ENCODE measurements at regions of chr12 and their contacts with region 1.

Region 1: DNA sequence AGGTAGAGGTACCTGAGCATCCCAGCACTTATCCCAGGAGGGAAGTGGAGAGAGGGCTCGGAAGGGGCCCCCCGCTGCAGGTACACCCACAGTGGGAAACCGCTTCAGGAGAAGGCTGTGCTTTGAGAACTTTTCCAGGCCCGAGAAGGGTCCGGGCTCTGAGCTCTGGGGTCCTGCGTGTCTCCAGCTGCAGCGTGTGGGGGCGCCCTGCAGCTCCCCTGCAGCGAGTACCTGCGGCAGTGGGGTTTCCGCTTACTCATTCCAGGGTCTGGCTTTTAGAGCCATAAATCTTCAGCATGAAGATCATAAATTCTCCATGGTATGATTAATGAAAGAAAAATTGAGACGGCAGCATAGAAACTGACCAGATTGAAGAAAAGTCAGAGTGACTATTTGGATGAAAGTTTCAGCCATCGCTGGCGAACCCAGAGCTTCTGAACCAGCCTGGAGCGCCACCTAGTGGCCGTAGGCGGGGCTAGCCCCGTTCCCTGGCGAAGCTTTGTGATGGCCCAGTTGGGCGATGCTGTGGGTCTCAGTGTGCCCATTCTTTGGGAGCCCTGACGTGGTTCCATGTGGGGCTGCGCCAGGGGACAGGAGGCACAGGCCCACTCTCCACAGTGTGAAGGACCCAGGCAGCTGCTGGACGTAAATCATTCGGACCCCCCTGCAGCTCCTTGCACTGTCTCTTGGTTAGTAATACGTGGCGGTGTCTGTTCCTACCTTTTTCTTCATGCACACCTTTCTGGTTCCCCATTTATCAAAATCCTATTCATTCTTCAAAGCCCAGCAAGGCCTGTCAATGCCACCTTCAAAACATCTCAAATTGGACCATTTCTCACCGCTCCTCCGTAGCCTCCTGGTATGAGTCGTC is 198.2 kb downstream of the TSPAN9 start:
- DNase-seq: peak; percentile 24
- ATAC-seq: peak; percentile 82
- H3K4me3 ChIP-seq: no peak overlapping the region
- H3K27ac ChIP-seq: no peak overlapping the region
- H3K4me1 ChIP-seq: peaks cover 7 to 28% of the 10 kb centered on the region in 2 experiments
- H3K27me3 ChIP-seq: no peaks in the 10 kb centered on the region
- CTCF ChIP-seq: peak; percentile 87 to 97 (median 96)
- POLR2A ChIP-seq: no peak
- RAD21 ChIP-seq: peak; percentile 92

Region 2: DNA sequence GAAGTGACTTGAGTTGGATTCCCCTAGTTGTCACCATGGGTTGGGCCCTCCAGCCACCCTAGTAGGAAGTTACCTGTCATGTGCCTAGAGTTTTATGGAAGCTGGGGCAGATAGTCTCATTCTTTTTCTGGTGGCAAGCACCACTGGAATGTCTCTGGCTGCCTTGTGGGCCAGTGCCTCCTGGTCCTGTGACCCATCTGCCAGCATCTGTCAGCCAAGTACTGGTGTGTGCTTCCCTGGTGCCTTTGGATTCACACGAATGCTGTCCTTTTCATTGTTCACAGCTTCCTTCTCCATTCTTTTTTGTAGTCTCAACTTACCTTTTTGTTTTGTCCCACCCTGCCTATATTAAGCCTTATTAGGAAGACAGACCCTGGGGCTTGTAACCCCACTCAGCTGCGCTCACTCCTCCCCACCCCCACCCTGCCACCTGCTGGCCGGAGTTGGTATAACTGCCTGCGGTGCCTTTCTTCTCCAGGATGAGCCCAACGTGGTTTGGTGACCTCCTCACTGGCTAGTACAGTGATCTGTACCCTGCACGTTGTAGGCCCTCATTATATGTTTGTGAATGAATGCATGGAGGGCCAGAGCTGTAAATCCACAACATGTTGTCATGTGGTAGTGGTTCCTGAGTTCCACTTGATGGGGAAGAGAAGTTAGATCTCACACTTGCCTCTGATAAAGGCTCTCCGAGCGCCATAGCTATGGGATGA is 72.5 kb before region 1 on chr12:
- CTCF ChIA-PET with region 1: interaction called, 4 read pairs
- POLR2A ChIA-PET with region 1: no interaction called
- RAD21 ChIA-PET with region 1: interaction called in 1 of 2 experiments, 3 read pairs
- intact Hi-C with region 1: loop called (anchors 5 kb)
- DNase-seq: no peak
- ATAC-seq: peak; percentile 67
- H3K4me3 ChIP-seq: no peak overlapping the region
- H3K27ac ChIP-seq: no peak overlapping the region
- H3K4me1 ChIP-seq: peaks cover 0 to 16% of the 10 kb centered on the region in 2 experiments; a peak in 2 of 4 replicates
- H3K27me3 ChIP-seq: no peaks in the 10 kb centered on the region
- CTCF ChIP-seq: peak; percentile 65 to 99 (median 95); a peak in 5 of 6 replicates
- POLR2A ChIP-seq: no peak
- RAD21 ChIP-seq: peak; percentile 61